ENCODE measurements at regions of chr2 and their contacts with region 1.

Region 1: GRCh38 chr2:120343433-120344105 is 2.4 kb upstream of the INHBB start:
- DNase-seq: peak; percentile 90
- ATAC-seq: peak; percentile 81
- H3K4me3 ChIP-seq: peak overlapping the region; percentile 52
- H3K27ac ChIP-seq: no peak overlapping the region
- H3K4me1 ChIP-seq: peaks cover 28% of the 10 kb centered on the region
- H3K27me3 ChIP-seq: peaks cover 58% of the 10 kb centered on the region
- CTCF ChIP-seq: peak; percentile 81

Region 2: GRCh38 chr2:120252225-120253021 is 91.1 kb before region 1 on chr2 and contains the start of gene RALB:
- intact Hi-C with region 1: no loop called
- DNase-seq: peak; percentile 100
- ATAC-seq: peak; percentile 95
- H3K4me3 ChIP-seq: peak within 1 kb of the TSS; percentile 79
- H3K27ac ChIP-seq: peak within 1 kb of the TSS; percentile 91
- H3K4me1 ChIP-seq: peaks cover 38% of the 10 kb centered on the region
- H3K27me3 ChIP-seq: no peaks in the 10 kb centered on the region
- CTCF ChIP-seq: no peak
- total RNA-seq, gene RALB: 65.9 TPM

Region 3: GRCh38 chr2:120441744-120442471 is 98.3 kb after region 1 on chr2:
- intact Hi-C with region 1: no loop called
- DNase-seq: peak; percentile 85
- ATAC-seq: peak; percentile 69
- H3K4me3 ChIP-seq: peak overlapping the region; percentile 48
- H3K27ac ChIP-seq: peak overlapping the region; percentile 75
- H3K4me1 ChIP-seq: peaks cover 3% of the 10 kb centered on the region
- H3K27me3 ChIP-seq: peaks cover 26% of the 10 kb centered on the region
- CTCF ChIP-seq: no peak

Region 4: DNA sequence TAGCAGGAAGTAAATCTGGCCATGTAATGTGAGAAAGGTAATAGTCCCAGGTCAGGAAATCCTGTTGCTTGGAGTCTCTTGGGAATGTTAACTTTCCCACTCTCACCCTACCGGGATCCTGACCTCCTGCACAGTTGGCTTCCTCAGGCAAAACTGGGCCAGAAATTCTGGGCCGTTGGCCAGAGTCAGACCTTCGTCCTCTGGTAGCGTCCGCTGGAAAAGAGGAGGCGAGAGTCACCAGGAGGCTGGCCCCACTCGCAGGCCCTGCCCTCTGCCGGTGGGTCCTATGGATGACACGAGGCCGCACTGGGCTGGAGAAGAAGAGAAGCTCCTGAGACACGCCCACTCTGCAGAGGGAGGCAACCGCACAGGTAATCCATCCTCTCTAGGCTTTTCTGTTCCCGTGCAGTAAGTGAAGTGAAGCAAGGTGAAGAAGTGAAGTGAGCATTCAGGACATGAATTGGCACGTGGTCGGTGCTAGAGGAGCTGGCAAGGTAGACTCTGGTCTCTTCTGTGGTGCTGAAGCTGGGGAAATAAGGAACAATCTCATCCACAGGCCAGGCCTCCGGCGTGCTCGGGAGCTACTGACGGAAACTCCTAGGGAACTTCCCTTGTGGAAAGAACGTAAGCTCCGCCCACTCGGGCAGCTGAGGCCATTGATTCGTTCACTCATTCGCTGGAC is 209.4 kb after region 1 on chr2:
- intact Hi-C with region 1: loop called (anchors 5 kb)
- DNase-seq: peak; percentile 89
- ATAC-seq: peak; percentile 93
- H3K4me3 ChIP-seq: no peak overlapping the region
- H3K27ac ChIP-seq: no peak overlapping the region
- H3K4me1 ChIP-seq: peaks cover 22% of the 10 kb centered on the region
- H3K27me3 ChIP-seq: no peaks in the 10 kb centered on the region
- CTCF ChIP-seq: peak; percentile 73

Region 5: DNA sequence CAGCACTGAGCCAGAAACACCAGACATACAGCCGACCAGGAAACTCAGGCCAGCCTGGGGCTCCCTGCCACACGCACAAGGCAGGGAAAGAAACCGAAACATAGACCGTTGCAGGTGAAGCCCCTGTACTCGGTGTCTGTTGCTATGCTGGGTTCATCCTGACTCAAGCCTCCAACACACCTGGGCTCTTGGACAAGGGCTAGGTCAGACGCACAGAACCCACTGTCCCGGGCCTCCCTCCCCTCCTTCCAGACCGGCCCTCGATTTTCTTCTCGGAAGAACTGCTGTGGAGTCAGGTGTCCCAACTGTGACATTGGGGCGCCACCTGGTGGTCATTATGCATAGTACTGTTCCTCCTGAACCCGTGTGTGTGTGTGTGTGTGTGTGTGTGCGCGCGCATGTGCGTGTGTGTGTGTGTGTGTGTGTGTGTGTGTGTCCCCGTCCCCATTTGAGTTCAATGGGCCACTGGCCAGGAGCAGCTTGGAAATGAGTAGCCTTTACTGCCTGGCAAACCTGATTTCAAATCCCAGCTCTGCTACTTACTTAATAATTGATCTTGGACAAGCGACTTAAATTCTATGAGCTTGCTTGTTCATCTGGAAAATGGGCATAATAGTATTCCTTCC is 336.7 kb after region 1 on chr2:
- intact Hi-C with region 1: loop called (anchors 5 kb)
- DNase-seq: peak; percentile 82
- ATAC-seq: peak; percentile 90
- H3K4me3 ChIP-seq: no peak overlapping the region
- H3K27ac ChIP-seq: no peak overlapping the region
- H3K4me1 ChIP-seq: no peaks in the 10 kb centered on the region
- H3K27me3 ChIP-seq: peaks cover 14% of the 10 kb centered on the region
- CTCF ChIP-seq: peak; percentile 44

Measured in upper lobe of right lung (tissue), 1 donor.